Mammary epithelial cell (primary cell): ENCODE measurements at regions of chr14 and their contacts with region 1.

Region 1: DNA sequence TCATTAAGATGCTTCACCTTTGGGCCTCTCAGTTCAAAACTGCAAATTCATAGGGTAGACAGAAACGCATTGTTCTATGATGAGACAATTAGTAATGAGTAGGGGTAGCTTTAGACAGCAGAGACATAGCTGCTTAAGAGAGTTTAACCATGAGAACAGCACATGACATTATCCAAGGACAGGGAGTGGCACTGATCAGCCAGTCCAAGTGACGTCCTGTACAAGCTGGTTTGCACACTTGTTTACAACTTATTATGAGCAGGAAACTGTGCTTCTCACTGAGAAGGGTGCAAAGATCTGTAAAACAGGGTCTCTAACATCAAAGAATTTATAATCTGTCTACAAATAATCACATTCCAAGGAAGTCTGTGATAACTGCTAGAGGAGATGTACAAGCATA is 11.2 kb upstream of the SRSF5 start:
- DNase-seq: no peak
- H3K4me3 ChIP-seq: no peak overlapping the region
- H3K27ac ChIP-seq: no peak overlapping the region
- H3K4me1 ChIP-seq: no peaks in the 10 kb centered on the region
- H3K27me3 ChIP-seq: no peaks in the 10 kb centered on the region
- CTCF ChIP-seq: no peak

Region 2: GRCh38 chr14:69693145-69693544 is 62.6 kb before region 1 on chr14:
- CTCF ChIA-PET with region 1: no interaction called
- dilution Hi-C with region 1: loop called (anchors 5 kb)
- in situ Hi-C with region 1: no loop called
- intact Hi-C with region 1: no loop called
- DNase-seq: no peak
- H3K4me3 ChIP-seq: no peak overlapping the region
- H3K27ac ChIP-seq: no peak overlapping the region
- H3K4me1 ChIP-seq: peaks cover 33% of the 10 kb centered on the region
- H3K27me3 ChIP-seq: no peaks in the 10 kb centered on the region
- CTCF ChIP-seq: no peak

Region 3: DNA sequence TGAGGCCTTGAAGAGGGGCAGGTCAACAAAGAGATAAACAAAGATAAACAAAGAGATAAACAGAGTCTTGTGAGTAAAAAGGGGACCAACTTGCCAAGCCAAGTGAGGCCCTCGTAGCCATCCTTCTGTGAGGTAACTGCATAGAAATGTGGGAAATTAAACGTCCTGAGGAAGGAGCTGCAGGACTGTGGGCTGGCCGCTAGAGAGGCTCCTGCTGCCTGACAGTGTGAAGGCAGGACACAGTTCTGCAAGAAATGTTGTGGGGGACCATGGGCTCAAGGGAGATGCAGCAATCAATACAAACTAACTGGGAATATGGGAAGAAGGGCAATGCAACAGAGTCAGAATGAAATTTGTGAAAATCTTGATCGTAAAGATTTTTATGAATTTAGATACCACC is 341.1 kb after region 1 on chr14:
- CTCF ChIA-PET with region 1: no interaction called
- dilution Hi-C with region 1: no loop called
- in situ Hi-C with region 1: no loop called
- intact Hi-C with region 1: no loop called
- DNase-seq: no peak
- H3K4me3 ChIP-seq: no peak overlapping the region
- H3K27ac ChIP-seq: no peak overlapping the region
- H3K4me1 ChIP-seq: no peaks in the 10 kb centered on the region
- H3K27me3 ChIP-seq: peaks cover 6% of the 10 kb centered on the region
- CTCF ChIP-seq: peak; percentile 31 to 40

Region 4: DNA sequence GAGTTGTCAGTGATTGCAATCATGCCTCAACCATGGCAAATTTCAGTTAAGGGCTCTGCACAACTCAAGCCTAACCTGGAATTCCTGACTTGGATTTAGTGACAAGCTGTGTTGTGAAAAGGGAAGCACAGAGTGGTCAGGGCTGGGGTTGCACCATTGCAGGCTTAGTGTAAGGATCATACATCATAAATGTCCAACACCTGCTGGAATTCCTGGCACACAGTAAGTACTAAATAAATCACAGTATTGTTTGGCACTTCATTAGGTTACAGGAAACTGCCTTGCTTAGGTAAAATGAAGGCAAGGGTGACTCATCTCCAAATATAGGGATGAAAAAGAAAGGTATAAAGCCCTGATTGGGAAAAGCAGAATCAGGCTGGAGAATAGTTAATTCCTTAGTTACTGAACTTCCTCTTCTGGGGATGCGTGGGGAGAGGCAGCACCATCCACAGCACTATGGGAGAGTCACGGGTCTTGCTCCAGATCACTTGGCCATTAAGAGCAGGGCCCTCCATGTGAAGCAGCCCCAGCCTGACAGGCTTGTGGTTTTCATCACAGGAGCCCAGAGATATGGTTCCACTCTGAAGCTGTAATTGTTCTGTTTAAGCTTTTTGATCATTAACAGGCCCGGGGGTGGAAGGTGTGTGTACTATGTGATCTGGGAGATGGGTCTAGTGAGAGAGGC is 393.3 kb after region 1 on chr14:
- CTCF ChIA-PET with region 1: no interaction called
- dilution Hi-C with region 1: no loop called
- in situ Hi-C with region 1: no loop called
- intact Hi-C with region 1: no loop called
- DNase-seq: no peak
- H3K4me3 ChIP-seq: no peak overlapping the region
- H3K27ac ChIP-seq: no peak overlapping the region
- H3K4me1 ChIP-seq: no peaks in the 10 kb centered on the region
- H3K27me3 ChIP-seq: no peaks in the 10 kb centered on the region
- CTCF ChIP-seq: no peak